ENCODE measurements at regions of chr2 and their contacts with region 1.

Region 1: GRCh38 chr2:74529357-74530238 is at the starts of genes AUP1 and HTRA2:
- DNase-seq: peak; percentile 90
- H3K4me3 Mint-ChIP-seq: peak within 1 kb of the TSS; percentile 99
- H3K27ac Mint-ChIP-seq: peak within 1 kb of the TSS; percentile 95
- H3K4me1 Mint-ChIP-seq: peaks cover 49% of the 10 kb centered on the region
- H3K27me3 Mint-ChIP-seq: no peaks in the 10 kb centered on the region
- total RNA-seq, gene AUP1: 178 and 187 TPM in 2 replicates
- total RNA-seq, gene HTRA2: 57.0 and 57.3 TPM in 2 replicates

Region 2: GRCh38 chr2:73896362-73897239 is 633.0 kb before region 1 on chr2:
- intact Hi-C with region 1: no loop called
- DNase-seq: peak; percentile 22
- H3K4me3 Mint-ChIP-seq: peak overlapping the region; percentile 54
- H3K27ac Mint-ChIP-seq: peak overlapping the region; percentile 90
- H3K4me1 Mint-ChIP-seq: peaks cover 43% of the 10 kb centered on the region
- H3K27me3 Mint-ChIP-seq: peaks cover 2% of the 10 kb centered on the region

Region 3: GRCh38 chr2:74391580-74392448 is 137.8 kb before region 1 on chr2:
- intact Hi-C with region 1: loop called (anchors 1 kb)
- DNase-seq: peak; percentile 88
- H3K4me3 Mint-ChIP-seq: peak overlapping the region; percentile 43
- H3K27ac Mint-ChIP-seq: peak overlapping the region; percentile 98
- H3K4me1 Mint-ChIP-seq: no peaks in the 10 kb centered on the region
- H3K27me3 Mint-ChIP-seq: peaks cover 10% of the 10 kb centered on the region

Region 4: GRCh38 chr2:74482801-74483674 is 46.6 kb before region 1 on chr2 and contains the starts of genes CCDC142 and TTC31:
- intact Hi-C with region 1: loop called (anchors 1 kb)
- DNase-seq: peak; percentile 89
- H3K4me3 Mint-ChIP-seq: peak within 1 kb of the TSS; percentile 99
- H3K27ac Mint-ChIP-seq: peak within 1 kb of the TSS; percentile 99
- H3K4me1 Mint-ChIP-seq: peaks cover 35% of the 10 kb centered on the region
- H3K27me3 Mint-ChIP-seq: no peaks in the 10 kb centered on the region
- total RNA-seq, gene CCDC142: 30.4 and 36.3 TPM in 2 replicates
- total RNA-seq, gene TTC31: 30.2 and 32.2 TPM in 2 replicates

Region 5: DNA sequence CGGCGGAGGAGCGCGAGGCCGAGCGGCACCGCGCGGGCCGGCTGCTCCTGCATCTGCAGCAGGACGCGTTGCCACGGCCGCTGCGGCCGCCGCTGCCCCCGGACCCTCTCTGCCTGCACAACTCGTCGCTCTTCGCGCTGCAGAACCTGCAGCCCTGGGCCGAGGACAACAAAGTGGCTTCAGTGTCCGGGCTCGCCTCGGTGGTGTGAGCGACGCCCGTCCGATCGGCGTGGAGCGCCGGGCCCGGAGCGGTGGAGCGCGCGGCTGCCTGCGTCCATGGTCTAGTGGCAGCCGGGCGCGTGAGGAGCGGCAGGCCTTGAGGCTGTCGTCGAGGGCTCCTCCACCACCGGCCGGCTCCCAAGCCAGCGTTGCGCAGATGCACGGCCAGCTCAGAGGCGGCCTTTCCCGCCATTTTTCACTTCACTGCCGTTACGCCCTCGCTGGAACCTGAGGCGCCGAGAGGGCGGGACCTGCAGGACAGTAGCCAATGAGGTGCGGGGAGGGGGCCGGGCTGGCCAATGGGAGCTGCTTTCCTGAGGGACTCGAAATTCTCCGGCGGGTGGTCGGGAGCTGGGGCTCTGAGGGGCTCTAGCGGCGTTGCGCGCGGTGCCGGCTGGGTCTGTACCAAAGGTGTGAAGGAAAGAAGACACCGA is 13.5 kb before region 1 on chr2:
- intact Hi-C with region 1: loop called (anchors 1 kb)
- DNase-seq: peak; percentile 72
- H3K4me3 Mint-ChIP-seq: peak overlapping the region; percentile 81
- H3K27ac Mint-ChIP-seq: no peak overlapping the region
- H3K4me1 Mint-ChIP-seq: peaks cover 16% of the 10 kb centered on the region
- H3K27me3 Mint-ChIP-seq: peaks cover 65% of the 10 kb centered on the region

Region 6: DNA sequence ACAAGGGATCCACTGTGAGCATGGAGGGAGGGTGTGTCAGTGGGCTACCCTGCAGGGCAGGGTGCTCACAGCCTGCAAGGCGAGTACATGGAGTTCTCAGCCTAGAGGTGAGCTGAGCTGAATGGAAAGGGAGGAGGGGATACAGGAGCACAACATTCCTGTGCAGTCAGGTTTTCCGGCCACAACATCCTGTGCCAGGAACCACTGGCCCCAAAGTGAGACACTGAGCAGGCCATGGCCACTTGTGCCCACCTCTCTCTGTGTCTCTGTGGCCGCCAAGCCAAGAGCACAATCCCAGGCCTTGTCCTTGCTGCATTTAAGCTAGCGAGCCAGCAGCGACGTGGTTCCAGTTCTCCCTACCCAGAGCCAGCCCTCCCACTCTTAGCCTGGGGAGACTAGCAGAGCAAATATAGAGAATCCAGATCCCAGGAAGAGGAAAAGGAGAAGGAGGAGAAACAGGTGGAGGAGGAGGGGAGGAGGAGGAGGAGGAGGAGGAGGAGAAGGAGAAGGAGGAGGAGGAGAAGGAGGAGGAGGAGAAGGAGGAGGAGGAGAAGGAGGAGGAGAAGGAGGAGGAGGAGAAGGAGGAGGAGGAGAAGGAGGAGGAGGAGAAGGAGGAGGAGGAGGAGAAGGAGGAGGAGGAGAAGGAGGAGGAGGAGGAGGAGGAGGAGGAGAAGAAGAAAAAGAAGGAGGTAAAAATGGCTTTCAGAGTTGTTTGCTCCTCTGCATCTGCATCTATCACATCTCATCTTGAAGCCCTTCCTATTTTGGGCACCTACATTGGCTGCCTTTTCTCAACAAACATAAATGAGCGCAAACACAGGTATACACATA is 31.2 kb after region 1 on chr2:
- intact Hi-C with region 1: no loop called
- DNase-seq: no peak
- H3K4me3 Mint-ChIP-seq: peak overlapping the region; percentile 24
- H3K27ac Mint-ChIP-seq: no peak overlapping the region
- H3K4me1 Mint-ChIP-seq: peaks cover 59% of the 10 kb centered on the region
- H3K27me3 Mint-ChIP-seq: peaks cover 2% of the 10 kb centered on the region

Region 7: GRCh38 chr2:74587664-74588277 is 58.2 kb after region 1 on chr2:
- intact Hi-C with region 1: loop called (anchors 1 kb)
- DNase-seq: peak; percentile 56
- H3K4me3 Mint-ChIP-seq: no peak overlapping the region
- H3K27ac Mint-ChIP-seq: peak overlapping the region; percentile 12
- H3K4me1 Mint-ChIP-seq: peaks cover 37% of the 10 kb centered on the region
- H3K27me3 Mint-ChIP-seq: peaks cover 17% of the 10 kb centered on the region